ENCODE measurements at regions of chr11 and their contacts with region 1.

Region 1: GRCh38 chr11:31820438-31820818 is 9.3 kb upstream of the PAX6 start:
- DNase-seq: no peak
- ATAC-seq: no peak
- H3K4me3 ChIP-seq: no peak overlapping the region
- H3K4me3 Mint-ChIP-seq: no peak overlapping the region
- H3K27ac ChIP-seq: no peak overlapping the region
- H3K27ac Mint-ChIP-seq: no peak overlapping the region
- H3K4me1 ChIP-seq: peaks cover 22 to 38% of the 10 kb centered on the region in 2 donors
- H3K4me1 Mint-ChIP-seq: peaks cover 13% of the 10 kb centered on the region
- H3K27me3 ChIP-seq: peaks cover 0 to 98% (median 86%) of the 10 kb centered on the region in 4 experiments
- H3K27me3 Mint-ChIP-seq: peaks cover 57% of the 10 kb centered on the region
- CTCF ChIP-seq: no peak

Region 2: GRCh38 chr11:31641477-31642062 is 178.9 kb before region 1 on chr11:
- CTCF ChIA-PET with region 1: no interaction called
- POLR2A ChIA-PET with region 1: no interaction called
- intact Hi-C with region 1: no loop called
- DNase-seq: no peak
- ATAC-seq: no peak
- H3K4me3 ChIP-seq: no peak overlapping the region
- H3K4me3 Mint-ChIP-seq: no peak overlapping the region
- H3K27ac ChIP-seq: no peak overlapping the region
- H3K27ac Mint-ChIP-seq: no peak overlapping the region
- H3K4me1 ChIP-seq: no peaks in the 10 kb centered on the region
- H3K4me1 Mint-ChIP-seq: no peaks in the 10 kb centered on the region
- H3K27me3 ChIP-seq: no peaks in the 10 kb centered on the region
- H3K27me3 Mint-ChIP-seq: no peaks in the 10 kb centered on the region
- CTCF ChIP-seq: peak; percentile 37

Region 3: DNA sequence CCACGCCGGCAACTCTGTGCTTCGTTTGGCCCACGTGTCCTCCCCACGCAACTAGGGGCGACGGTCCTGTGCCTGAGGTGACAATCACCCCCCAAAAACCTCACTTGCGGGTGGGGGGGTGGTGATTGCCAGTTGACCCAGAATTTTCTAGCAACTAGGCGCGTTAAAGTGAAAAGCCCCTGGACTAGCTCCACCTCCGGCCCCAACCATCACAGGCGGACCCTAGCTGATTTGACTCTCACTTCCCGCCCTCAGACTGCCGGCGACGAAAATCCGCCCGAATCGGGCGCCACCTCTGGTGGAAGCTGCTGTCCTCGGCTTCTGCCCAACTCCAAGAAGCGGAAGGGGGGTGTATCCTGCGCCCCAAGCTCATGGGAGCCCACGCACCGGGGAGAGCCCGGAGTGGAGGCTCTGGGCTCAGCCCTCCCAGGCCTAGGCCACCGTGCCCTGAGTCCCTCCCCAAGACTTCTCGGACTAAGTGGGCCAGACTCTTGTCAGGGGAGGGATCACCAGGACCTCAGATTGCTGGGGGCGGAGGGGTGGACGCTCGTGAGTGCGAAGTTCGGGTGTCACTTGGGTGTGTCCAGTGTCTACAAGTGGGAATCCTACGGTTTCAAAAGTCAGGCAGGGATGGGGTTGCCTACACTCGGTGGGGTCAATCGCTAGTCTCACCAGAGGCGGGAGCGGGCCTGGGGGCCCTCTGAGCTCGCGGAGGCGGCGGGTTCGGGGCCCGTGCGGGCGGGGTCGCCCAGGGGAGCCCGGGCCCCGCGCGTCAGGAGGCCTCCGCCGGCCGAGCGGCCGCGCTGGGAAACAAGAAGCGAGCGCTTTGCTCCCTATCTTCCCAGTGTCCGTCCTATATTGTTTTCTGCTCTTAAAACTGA is 21.6 kb before region 1 on chr11:
- CTCF ChIA-PET with region 1: no interaction called
- POLR2A ChIA-PET with region 1: no interaction called
- intact Hi-C with region 1: loop called (anchors 2 kb)
- DNase-seq: peak; percentile 44
- ATAC-seq: no peak
- H3K4me3 ChIP-seq: no peak overlapping the region
- H3K4me3 Mint-ChIP-seq: peak overlapping the region; percentile 34
- H3K27ac ChIP-seq: no peak overlapping the region
- H3K27ac Mint-ChIP-seq: no peak overlapping the region
- H3K4me1 ChIP-seq: peaks cover 9 to 19% of the 10 kb centered on the region in 2 donors
- H3K4me1 Mint-ChIP-seq: peaks cover 17% of the 10 kb centered on the region
- H3K27me3 ChIP-seq: peaks cover 0 to 74% (median 64%) of the 10 kb centered on the region in 4 experiments
- H3K27me3 Mint-ChIP-seq: peaks cover 73% of the 10 kb centered on the region
- CTCF ChIP-seq: no peak

Region 4: GRCh38 chr11:31834237-31834636 is 13.8 kb after region 1 on chr11:
- CTCF ChIA-PET with region 1: no interaction called
- POLR2A ChIA-PET with region 1: no interaction called
- intact Hi-C with region 1: no loop called
- DNase-seq: no peak
- ATAC-seq: no peak
- H3K4me3 ChIP-seq: no peak overlapping the region
- H3K4me3 Mint-ChIP-seq: no peak overlapping the region
- H3K27ac ChIP-seq: no peak overlapping the region
- H3K27ac Mint-ChIP-seq: no peak overlapping the region
- H3K4me1 ChIP-seq: no peaks in the 10 kb centered on the region
- H3K4me1 Mint-ChIP-seq: no peaks in the 10 kb centered on the region
- H3K27me3 ChIP-seq: peaks cover 0 to 30% (median 12%) of the 10 kb centered on the region in 4 experiments
- H3K27me3 Mint-ChIP-seq: peaks cover 15% of the 10 kb centered on the region
- CTCF ChIP-seq: no peak

Measured in B cell (primary cell).